Left ventricle myocardium inferior (tissue), 1 donor: ENCODE measurements at regions of chr10 and their contacts with region 1.

Region 1: DNA sequence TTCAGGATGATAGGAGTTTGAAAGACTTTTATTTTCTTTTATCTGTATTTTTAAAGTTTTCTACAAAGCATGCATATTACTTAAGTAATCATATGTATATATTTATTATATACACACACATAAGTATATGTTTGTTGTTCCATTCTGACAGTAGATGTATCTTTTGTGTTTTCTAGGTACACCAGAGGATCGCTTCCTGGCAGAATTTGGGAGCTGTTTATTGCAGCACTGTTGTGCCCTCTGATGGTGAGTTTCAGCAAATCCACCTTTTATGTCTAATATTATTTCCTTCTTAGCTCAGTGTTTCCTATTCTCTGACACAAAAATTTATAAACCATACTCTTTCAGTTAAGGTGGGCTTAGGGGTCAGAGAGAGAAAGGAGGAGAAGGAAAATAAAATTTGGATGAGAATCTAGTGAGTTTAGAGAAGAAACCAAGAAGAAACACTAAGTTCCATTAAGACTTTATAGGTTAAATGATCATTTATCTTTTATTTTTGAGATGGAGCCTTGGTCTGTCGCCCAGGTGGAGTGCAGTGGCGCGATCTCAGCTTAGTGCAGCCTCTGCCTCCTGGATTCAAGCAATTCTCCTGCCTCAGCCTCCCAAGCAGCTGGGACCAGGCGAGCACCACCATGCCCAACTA is 59.2 kb upstream of the OIT3 start:
- DNase-seq: no peak
- H3K4me3 ChIP-seq: no peak overlapping the region
- H3K27ac ChIP-seq: no peak overlapping the region
- H3K4me1 ChIP-seq: peaks cover 21% of the 10 kb centered on the region
- H3K27me3 ChIP-seq: no peaks in the 10 kb centered on the region
- CTCF ChIP-seq: peak; percentile 75

Region 2: DNA sequence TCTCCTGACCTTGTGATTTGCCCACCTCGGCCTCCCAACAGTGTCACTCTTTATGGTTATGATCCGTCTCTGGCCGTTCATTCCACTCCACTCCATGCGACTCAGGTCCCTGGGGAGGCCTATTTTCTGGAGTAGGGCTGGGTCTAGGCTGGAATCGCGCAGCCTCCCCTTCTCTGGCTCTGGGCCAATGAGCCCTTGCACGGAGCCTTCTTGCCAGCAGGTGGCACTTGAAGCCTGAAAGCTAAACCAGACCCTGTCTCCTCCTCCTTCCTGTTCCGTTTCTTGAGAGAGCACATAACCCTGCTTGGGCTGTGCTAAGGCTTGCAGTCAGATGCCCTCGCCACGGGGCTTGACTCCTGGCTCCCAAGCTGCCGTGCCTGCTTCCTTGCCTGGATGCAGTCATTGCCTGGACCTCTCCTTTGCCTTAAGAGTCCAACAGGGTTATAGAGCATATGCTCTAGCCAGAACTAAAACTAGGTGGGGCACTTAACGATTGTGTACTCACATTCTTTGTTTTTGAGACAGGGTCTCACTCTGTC is 470.0 kb before region 1 on chr10:
- intact Hi-C with region 1: loop called (anchors 10 kb)
- DNase-seq: peak; percentile 90
- H3K4me3 ChIP-seq: peak overlapping the region; percentile 48
- H3K27ac ChIP-seq: peak overlapping the region; percentile 72
- H3K4me1 ChIP-seq: peaks cover 12% of the 10 kb centered on the region
- H3K27me3 ChIP-seq: no peaks in the 10 kb centered on the region
- CTCF ChIP-seq: peak; percentile 98

Region 3: DNA sequence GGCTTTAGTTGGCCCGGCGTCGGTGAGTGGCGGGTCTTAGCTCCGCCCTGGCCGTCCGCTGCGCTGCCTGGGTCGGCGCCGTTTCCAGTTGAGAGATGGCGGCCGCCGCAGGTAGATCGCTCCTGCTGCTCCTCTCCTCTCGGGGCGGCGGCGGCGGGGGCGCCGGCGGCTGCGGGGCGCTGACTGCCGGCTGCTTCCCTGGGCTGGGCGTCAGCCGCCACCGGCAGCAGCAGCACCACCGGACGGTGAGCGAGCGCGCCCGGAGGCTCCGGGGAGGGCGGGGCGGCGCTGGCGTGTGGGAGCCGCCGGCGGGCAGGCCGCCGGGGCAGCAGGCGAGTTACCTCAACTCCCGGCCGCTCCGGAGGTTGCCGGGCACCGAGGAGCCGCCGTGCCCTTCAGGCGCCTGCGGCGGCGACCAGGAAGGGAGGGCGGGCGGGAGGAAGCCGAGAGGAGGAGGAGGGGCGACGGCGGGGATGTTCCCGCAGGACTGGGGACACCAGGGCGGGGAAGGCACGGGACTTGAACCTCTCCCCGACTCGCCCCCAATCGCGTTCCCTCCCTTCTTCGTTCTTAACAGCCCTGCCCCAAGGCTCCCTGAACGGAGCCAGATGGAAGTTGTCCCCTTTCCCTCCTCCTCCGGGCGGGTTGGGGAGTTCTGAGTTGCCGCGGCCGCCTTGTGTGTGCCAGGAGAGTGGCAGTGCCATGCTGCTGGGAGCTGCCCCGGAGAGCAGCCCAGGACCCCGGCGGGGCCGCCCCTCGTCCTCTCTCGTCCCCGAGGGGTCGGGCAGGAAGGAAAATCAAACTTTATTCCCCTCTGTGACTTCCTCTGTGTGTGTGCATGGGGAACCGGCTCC is 142.0 kb before region 1 on chr10 and contains the start of gene MCU:
- intact Hi-C with region 1: loop called (anchors 5 kb)
- DNase-seq: peak; percentile 95
- H3K4me3 ChIP-seq: peak within 1 kb of the TSS; percentile 83
- H3K27ac ChIP-seq: peak within 1 kb of the TSS; percentile 97
- H3K4me1 ChIP-seq: peaks cover 41% of the 10 kb centered on the region
- H3K27me3 ChIP-seq: no peaks in the 10 kb centered on the region
- CTCF ChIP-seq: no peak
- total RNA-seq, gene MCU: 20.3 TPM

Region 4: DNA sequence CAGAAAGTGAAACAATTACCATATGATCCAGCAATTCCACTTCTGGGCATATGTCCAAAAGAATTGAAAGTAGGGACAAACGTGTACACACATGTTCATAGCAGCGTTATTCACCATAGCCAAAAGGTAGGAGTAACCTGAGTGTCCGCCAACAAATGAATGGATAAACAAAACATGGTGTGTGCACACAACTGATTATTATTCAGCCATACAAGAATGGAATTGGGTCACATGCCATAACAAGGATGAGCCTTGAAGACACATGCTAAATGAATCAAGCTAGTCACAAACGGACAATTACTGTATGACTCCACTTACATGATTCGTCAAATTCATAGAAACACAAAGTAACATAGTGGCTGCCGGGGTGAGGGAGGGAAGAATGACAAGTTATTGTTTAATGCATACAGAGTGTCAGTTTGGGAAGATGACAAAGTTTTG is 55.1 kb after region 1 on chr10:
- intact Hi-C with region 1: no loop called
- DNase-seq: no peak
- H3K4me3 ChIP-seq: no peak overlapping the region
- H3K27ac ChIP-seq: no peak overlapping the region
- H3K4me1 ChIP-seq: peaks cover 23% of the 10 kb centered on the region
- H3K27me3 ChIP-seq: no peaks in the 10 kb centered on the region
- CTCF ChIP-seq: no peak

Region 5: GRCh38 chr10:73017955-73018480 is 183.7 kb after region 1 on chr10:
- intact Hi-C with region 1: no loop called
- DNase-seq: peak; percentile 37
- H3K4me3 ChIP-seq: no peak overlapping the region
- H3K27ac ChIP-seq: peak overlapping the region; percentile 59
- H3K4me1 ChIP-seq: peaks cover 58% of the 10 kb centered on the region
- H3K27me3 ChIP-seq: no peaks in the 10 kb centered on the region
- CTCF ChIP-seq: no peak